ENCODE measurements at regions of chr19 and their contacts with region 1.

Region 1: DNA sequence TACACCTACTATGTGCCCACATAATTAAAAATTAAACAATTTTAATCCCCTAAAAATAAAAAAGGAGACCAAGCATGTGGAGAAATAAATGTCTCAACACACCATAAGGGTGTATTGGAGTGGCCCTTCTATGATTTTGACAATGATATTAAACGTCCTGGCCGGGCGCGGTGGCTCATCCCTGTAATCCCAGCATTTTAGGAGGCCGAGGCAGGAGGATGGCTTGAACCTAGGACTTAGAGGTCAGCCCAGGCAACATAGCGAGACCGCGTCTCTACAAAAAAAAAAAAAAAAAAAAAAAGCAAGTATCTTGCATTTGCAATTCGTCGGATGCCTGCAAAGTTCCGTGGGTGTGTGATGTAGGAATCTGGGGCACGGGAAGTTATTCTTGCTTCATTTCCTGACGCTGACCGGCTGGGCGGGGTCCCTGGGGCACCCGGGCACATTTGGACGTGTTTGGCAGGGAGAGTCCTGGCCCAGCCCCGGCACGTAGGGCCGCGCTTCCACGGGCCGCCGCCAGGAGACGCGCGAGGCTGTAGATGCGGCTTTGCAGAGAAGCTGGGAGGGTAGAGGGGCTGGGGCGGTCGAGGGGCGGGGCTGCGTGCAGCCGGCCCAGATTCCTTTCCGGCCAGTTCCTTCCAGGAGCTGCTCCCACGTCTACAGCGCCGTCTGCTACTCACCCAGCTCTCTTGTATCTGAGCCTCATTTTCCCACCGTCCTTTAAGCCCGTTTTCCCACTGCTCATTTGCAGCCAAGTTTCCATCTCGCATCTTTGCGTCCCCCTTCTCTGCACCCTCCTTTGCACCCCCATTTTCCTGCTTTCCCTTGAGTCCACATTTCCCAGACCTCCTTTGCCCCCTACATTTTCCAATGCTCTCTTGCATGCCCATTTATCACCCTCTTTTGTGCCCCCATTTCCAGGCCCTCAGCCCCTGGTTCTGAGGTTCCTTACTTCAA is 2.2 kb upstream of the TSPAN16 start:
- DNase-seq: peak; percentile 64 to 75 (median 71)
- H3K4me3 ChIP-seq: no peak overlapping the region
- H3K4me3 Mint-ChIP-seq: peak overlapping the region in 3 of 8 donors; percentile 20 to 71 (median 48)
- H3K27ac ChIP-seq: no peak overlapping the region
- H3K27ac Mint-ChIP-seq: peak overlapping the region in 2 of 7 donors; percentile 41 to 46
- H3K4me1 ChIP-seq: peaks cover 8% of the 10 kb centered on the region
- H3K4me1 Mint-ChIP-seq: peaks cover 4 to 8% (median 7%) of the 10 kb centered on the region in 4 donors
- H3K27me3 ChIP-seq: no peaks in the 10 kb centered on the region
- H3K27me3 Mint-ChIP-seq: peaks cover 12 to 16% of the 10 kb centered on the region in 2 donors

Region 2: DNA sequence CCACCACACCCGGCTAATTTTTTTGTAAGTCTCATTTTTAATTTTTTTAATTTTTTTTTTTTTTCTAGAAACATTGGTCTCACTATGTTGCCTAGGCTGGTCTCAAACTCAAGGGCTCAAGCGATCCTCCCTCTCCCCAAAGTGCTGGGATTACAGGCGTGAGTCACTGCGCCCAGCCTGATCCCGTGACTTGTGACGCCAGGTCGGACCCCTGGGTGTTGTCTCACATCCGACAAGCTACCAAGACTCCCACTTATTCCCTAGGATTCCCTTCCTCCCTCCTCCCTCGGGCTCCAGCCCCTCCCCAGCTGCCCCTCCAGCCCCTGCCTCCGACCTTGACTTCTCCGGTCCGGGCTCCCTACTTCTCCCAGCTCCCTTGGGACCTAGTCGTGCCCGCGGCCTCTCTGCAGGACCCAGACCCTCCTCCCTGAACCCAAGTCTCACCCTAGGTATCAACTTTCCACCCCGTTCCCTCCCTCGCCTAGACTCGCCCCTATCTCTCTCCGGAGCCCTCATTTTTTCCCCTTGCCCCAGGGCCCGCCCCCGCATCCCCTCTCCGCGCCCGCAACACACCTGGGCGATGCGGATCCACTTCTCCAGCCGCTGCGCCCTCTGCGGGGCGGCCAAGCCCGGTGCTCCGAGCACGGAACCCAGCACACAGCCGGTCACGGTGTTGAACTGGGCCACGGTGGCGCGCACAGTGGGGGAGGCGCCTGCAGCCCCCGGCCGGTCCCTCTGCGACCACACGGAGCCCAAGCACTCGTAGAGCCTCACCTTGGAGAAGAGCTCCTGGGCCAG is 112.3 kb after region 1 on chr19:
- CTCF ChIA-PET with region 1: interaction called, 4 read pairs
- POLR2A ChIA-PET with region 1: no interaction called
- intact Hi-C with region 1: loop called (anchors 1 kb)
- DNase-seq: no peak
- H3K4me3 ChIP-seq: no peak overlapping the region
- H3K4me3 Mint-ChIP-seq: no peak overlapping the region
- H3K27ac ChIP-seq: no peak overlapping the region
- H3K27ac Mint-ChIP-seq: no peak overlapping the region
- H3K4me1 ChIP-seq: no peaks in the 10 kb centered on the region
- H3K4me1 Mint-ChIP-seq: no peaks in the 10 kb centered on the region
- H3K27me3 ChIP-seq: no peaks in the 10 kb centered on the region
- H3K27me3 Mint-ChIP-seq: peaks cover 13 to 15% of the 10 kb centered on the region in 2 donors

Region 3: DNA sequence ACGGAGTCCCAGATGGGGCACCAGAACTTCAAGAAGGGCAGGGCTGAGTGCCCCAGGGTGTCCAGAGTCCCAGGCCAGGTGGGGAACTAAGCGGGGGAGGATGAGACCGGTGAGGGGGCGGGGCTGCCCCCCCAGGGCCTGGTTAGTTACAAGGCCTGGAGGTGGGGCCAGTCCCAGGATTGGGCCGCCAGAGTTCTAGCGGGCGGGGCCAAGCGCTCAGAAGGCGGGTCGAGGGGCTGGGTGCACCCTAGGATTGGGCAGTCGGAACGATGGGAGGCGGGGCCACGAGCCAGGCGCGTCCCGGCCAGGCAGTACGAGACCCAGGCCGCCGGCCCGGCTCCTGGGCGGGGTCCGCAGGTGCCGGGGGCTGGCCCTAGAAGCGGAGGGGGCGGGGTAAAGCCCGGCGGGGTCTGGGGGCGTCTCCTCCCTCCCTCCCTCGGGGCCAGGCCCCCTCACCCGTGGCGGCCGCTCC is 211.4 kb after region 1 on chr19:
- CTCF ChIA-PET with region 1: no interaction called
- POLR2A ChIA-PET with region 1: no interaction called
- intact Hi-C with region 1: no loop called
- DNase-seq: peak; percentile 95 to 97 (median 96)
- H3K4me3 ChIP-seq: peak overlapping the region; percentile 59 to 71
- H3K4me3 Mint-ChIP-seq: peak overlapping the region; percentile 79 to 94 (median 86)
- H3K27ac ChIP-seq: peak overlapping the region; percentile 95
- H3K27ac Mint-ChIP-seq: peak overlapping the region; percentile 88 to 94 (median 92)
- H3K4me1 ChIP-seq: peaks cover 14% of the 10 kb centered on the region
- H3K4me1 Mint-ChIP-seq: peaks cover 15 to 28% (median 18%) of the 10 kb centered on the region in 4 donors
- H3K27me3 ChIP-seq: no peaks in the 10 kb centered on the region
- H3K27me3 Mint-ChIP-seq: no peaks in the 10 kb centered on the region

Measured in CD4-positive, alpha-beta memory T cell (primary cell).